ENCODE measurements at regions of chr11 and their contacts with region 1.

Region 1: GRCh38 chr11:117946842-117947526 is 17.8 kb upstream of the TMPRSS13 start:
- DNase-seq: peak; percentile 85
- H3K4me3 Mint-ChIP-seq: no peak overlapping the region
- H3K27ac Mint-ChIP-seq: peak overlapping the region; percentile 43
- H3K4me1 Mint-ChIP-seq: peaks cover 84% of the 10 kb centered on the region
- H3K27me3 Mint-ChIP-seq: no peaks in the 10 kb centered on the region

Region 2: DNA sequence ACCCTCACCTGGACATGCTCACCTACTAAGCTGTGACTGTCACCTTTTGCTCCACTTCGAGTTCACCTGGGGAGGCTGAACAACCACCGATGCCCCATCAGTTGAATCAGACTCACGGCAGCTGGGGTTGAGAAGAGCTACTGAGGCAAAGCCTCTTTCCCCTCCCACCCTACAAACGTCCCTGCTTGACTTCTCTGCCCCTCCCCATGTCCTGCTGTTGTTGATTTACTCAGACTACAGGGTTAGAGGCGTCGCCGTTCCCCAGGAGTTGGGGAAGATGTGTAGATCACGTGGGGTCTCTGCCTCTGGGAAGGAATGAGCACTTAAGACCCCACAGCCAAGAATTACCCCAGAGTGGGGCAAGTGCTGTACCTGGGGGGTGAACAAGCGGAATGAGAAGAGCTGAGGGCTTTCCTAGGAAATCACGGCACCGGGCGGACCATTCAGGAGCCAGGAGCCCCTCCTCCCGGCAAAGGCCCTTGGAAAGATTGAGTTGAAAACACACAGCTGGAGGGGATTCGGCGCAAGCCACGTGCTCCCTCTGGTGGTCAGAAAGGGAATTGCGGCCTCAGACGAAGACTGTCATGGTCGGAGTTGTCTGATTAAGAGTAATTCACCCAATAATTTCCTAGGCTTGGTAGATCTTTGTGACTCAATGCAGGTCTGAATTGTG is 129.5 kb before region 1 on chr11:
- CTCF ChIA-PET with region 1: interaction called, 135 read pairs
- POLR2A ChIA-PET with region 1: interaction called, 14 read pairs
- DNase-seq: peak; percentile 89
- H3K4me3 Mint-ChIP-seq: no peak overlapping the region
- H3K27ac Mint-ChIP-seq: peak overlapping the region; percentile 73
- H3K4me1 Mint-ChIP-seq: peaks cover 65% of the 10 kb centered on the region
- H3K27me3 Mint-ChIP-seq: no peaks in the 10 kb centered on the region

Region 3: GRCh38 chr11:117851106-117851505 is 95.9 kb before region 1 on chr11:
- CTCF ChIA-PET with region 1: interaction called, 171 read pairs
- POLR2A ChIA-PET with region 1: interaction called, 3 read pairs
- DNase-seq: no peak
- H3K4me3 Mint-ChIP-seq: no peak overlapping the region
- H3K27ac Mint-ChIP-seq: no peak overlapping the region
- H3K4me1 Mint-ChIP-seq: peaks cover 8% of the 10 kb centered on the region
- H3K27me3 Mint-ChIP-seq: peaks cover 30% of the 10 kb centered on the region

Region 4: DNA sequence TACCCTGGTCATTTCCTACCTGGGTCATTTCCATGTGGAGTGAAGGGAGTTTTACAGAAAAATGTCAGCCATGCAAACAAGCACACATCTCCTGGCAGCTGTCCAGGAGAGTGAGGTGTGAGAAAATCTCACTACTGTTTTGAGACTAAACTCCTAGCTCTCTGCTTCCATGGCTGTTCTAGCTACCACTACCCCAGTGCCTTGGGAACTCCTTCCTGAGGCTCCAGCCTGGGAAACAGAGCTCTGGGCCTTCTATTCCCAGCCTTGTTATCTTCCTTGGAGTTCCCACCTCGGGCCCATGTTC is 15.0 kb before region 1 on chr11:
- CTCF ChIA-PET with region 1: interaction called, 42 read pairs
- POLR2A ChIA-PET with region 1: interaction called, 9 read pairs
- DNase-seq: peak; percentile 39
- H3K4me3 Mint-ChIP-seq: no peak overlapping the region
- H3K27ac Mint-ChIP-seq: peak overlapping the region; percentile 29
- H3K4me1 Mint-ChIP-seq: peaks cover 61% of the 10 kb centered on the region
- H3K27me3 Mint-ChIP-seq: peaks cover 14% of the 10 kb centered on the region

Region 5: DNA sequence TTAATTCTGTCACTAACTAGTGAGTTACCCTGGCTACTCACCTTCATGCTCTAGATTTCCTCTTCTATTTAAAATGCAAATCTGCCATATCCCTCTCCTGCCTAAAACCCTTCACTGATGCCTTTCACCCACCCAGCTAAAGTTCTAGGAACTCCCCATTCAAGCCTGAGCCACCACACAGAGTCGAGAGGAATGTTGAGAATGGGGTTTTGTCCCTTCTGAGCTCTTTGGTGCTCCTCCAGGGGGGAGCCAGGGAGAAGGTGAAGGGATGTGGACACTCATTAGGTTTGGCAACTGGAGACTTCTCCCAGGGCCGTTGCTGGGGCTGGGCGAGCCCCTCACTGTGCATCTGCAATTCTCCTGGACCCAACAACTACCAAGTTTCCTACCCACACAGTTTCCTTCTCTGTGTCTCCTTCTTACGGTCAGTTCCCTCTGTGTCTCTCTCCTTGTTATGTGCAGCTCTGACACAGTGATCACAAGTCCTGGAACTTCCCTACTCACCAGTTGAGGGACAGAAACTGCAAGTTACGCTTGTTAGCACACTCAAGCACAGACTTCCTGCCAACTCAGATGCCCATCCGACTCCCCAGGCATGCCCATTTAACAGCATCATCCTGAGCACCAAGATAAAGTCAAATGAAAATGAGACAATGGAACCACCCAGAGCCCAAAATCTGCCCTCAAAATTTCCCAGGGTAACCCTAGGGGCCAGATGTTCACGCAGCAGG is 32.7 kb after region 1 on chr11:
- CTCF ChIA-PET with region 1: interaction called, 170 read pairs
- POLR2A ChIA-PET with region 1: interaction called, 878 read pairs
- DNase-seq: no peak
- H3K4me3 Mint-ChIP-seq: no peak overlapping the region
- H3K27ac Mint-ChIP-seq: peak overlapping the region; percentile 77
- H3K4me1 Mint-ChIP-seq: peaks cover 71% of the 10 kb centered on the region
- H3K27me3 Mint-ChIP-seq: no peaks in the 10 kb centered on the region

Region 6: GRCh38 chr11:118046051-118046963 is 99.3 kb after region 1 on chr11:
- CTCF ChIA-PET with region 1: interaction called, 333 read pairs
- POLR2A ChIA-PET with region 1: interaction called, 122 read pairs
- DNase-seq: peak; percentile 44
- H3K4me3 Mint-ChIP-seq: no peak overlapping the region
- H3K27ac Mint-ChIP-seq: peak overlapping the region; percentile 78
- H3K4me1 Mint-ChIP-seq: peaks cover 90% of the 10 kb centered on the region
- H3K27me3 Mint-ChIP-seq: no peaks in the 10 kb centered on the region